CD8-positive, alpha-beta T cell (primary cell): ENCODE measurements at regions of chr17 and their contacts with region 1.

Region 1: DNA sequence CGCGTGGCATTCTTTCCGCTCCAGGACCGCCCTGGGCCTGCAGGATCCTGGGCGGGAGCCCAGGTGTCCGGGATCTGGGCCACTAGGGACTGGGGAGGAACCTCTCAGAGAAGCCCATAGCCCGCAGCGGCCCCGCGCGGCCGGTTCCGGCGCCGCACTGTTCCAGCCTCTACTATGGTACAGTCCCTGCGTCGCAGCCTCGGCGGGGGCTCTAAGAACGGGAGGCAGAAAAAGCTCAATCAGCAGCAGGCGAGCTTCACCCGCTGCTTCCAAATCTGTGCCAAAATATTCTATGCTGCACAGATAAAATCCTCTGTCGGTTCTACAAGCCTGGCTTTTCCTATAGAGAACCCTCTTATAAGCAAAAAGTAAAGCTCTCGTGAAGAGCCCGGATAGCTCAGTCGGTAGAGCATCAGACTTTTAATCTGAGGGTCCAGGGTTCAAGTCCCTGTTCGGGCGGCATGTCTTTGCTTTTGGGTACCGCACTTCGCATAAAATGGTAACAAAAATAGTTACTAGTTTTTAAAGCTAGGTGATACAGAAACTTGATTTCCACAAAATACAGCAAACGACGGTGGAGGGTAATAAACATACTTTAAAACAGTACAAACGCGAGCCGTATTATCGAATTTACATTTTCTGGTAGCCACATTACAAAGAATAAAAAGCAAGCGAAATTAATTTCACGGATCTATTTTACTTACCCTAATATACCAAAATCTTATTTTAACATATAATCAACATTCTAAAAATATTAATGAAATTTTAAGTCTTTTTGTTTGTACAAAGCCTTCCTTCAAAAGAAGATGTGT is 661 bp upstream of the ALOXE3 start:
- DNase-seq: peak; percentile 70 to 90 (median 83)
- ATAC-seq: peak; percentile 62
- H3K4me3 ChIP-seq: peak overlapping the region; percentile 69 to 77
- H3K4me3 Mint-ChIP-seq: peak overlapping the region; percentile 93
- H3K27ac ChIP-seq: peak overlapping the region; percentile 32 to 53
- H3K27ac Mint-ChIP-seq: peak overlapping the region; percentile 95
- H3K4me1 ChIP-seq: peaks cover 46% of the 10 kb centered on the region
- H3K4me1 Mint-ChIP-seq: peaks cover 45% of the 10 kb centered on the region
- H3K27me3 ChIP-seq: peaks cover 0 to 57% of the 10 kb centered on the region in 2 experiments
- H3K27me3 Mint-ChIP-seq: peaks cover 33% of the 10 kb centered on the region
- CTCF ChIP-seq: peak; percentile 88

Region 2: GRCh38 chr17:8073627-8074484 is 45.1 kb before region 1 on chr17:
- CTCF ChIA-PET with region 1: interaction called, 66 read pairs
- POLR2A ChIA-PET with region 1: interaction called, 7 read pairs
- intact Hi-C with region 1: loop called in 1 of 2 experiments (anchors 2 kb)
- DNase-seq: peak; percentile 74 to 93 (median 88)
- ATAC-seq: peak; percentile 96
- H3K4me3 ChIP-seq: peak overlapping the region in 1 of 2 experiments; percentile 45
- H3K4me3 Mint-ChIP-seq: peak overlapping the region; percentile 84
- H3K27ac ChIP-seq: no peak overlapping the region
- H3K27ac Mint-ChIP-seq: peak overlapping the region; percentile 37
- H3K4me1 ChIP-seq: peaks cover 22% of the 10 kb centered on the region
- H3K4me1 Mint-ChIP-seq: peaks cover 22% of the 10 kb centered on the region
- H3K27me3 ChIP-seq: peaks cover 11 to 22% of the 10 kb centered on the region in 2 experiments
- H3K27me3 Mint-ChIP-seq: peaks cover 36% of the 10 kb centered on the region
- CTCF ChIP-seq: peak; percentile 89

Region 3: GRCh38 chr17:8151123-8151640 is 32.2 kb after region 1 on chr17:
- CTCF ChIA-PET with region 1: interaction called, 15 read pairs
- POLR2A ChIA-PET with region 1: interaction called, 16 read pairs
- intact Hi-C with region 1: loop called (anchors 1 kb)
- DNase-seq: peak in 8 of 9 experiments; percentile 85 to 96 (median 90)
- ATAC-seq: peak; percentile 44
- H3K4me3 ChIP-seq: peak overlapping the region; percentile 63 to 69
- H3K4me3 Mint-ChIP-seq: no peak overlapping the region
- H3K27ac ChIP-seq: peak overlapping the region; percentile 100
- H3K27ac Mint-ChIP-seq: no peak overlapping the region
- H3K4me1 ChIP-seq: peaks cover 56% of the 10 kb centered on the region
- H3K4me1 Mint-ChIP-seq: peaks cover 49% of the 10 kb centered on the region
- H3K27me3 ChIP-seq: no peaks in the 10 kb centered on the region
- H3K27me3 Mint-ChIP-seq: no peaks in the 10 kb centered on the region
- CTCF ChIP-seq: no peak

Region 4: GRCh38 chr17:8189711-8190477 is 70.9 kb after region 1 on chr17 and contains the start of gene BORCS6:
- CTCF ChIA-PET with region 1: interaction called, 45 read pairs
- POLR2A ChIA-PET with region 1: interaction called, 36 read pairs
- intact Hi-C with region 1: loop called (anchors 1 kb)
- DNase-seq: peak; percentile 87 to 99 (median 93)
- ATAC-seq: peak; percentile 69
- H3K4me3 ChIP-seq: peak within 1 kb of the TSS; percentile 95 to 98
- H3K4me3 Mint-ChIP-seq: peak within 1 kb of the TSS; percentile 1
- H3K27ac ChIP-seq: peak within 1 kb of the TSS; percentile 63 to 93
- H3K27ac Mint-ChIP-seq: peak within 1 kb of the TSS; percentile 94
- H3K4me1 ChIP-seq: peaks cover 38% of the 10 kb centered on the region
- H3K4me1 Mint-ChIP-seq: peaks cover 13% of the 10 kb centered on the region
- H3K27me3 ChIP-seq: no peaks in the 10 kb centered on the region
- H3K27me3 Mint-ChIP-seq: no peaks in the 10 kb centered on the region
- CTCF ChIP-seq: no peak
- total RNA-seq, gene BORCS6: 6.1 to 6.7 TPM

Region 5: GRCh38 chr17:8288336-8289102 is 169.5 kb after region 1 on chr17 and contains the start of gene RANGRF:
- CTCF ChIA-PET with region 1: no interaction called
- POLR2A ChIA-PET with region 1: interaction called, 4 read pairs
- intact Hi-C with region 1: loop called in 1 of 2 experiments (anchors 2 kb)
- DNase-seq: peak; percentile 38 to 89 (median 79)
- ATAC-seq: peak; percentile 94
- H3K4me3 ChIP-seq: peak within 1 kb of the TSS; percentile 73 to 82
- H3K4me3 Mint-ChIP-seq: peak within 1 kb of the TSS; percentile 97
- H3K27ac ChIP-seq: peak within 1 kb of the TSS; percentile 77 to 89
- H3K27ac Mint-ChIP-seq: peak within 1 kb of the TSS; percentile 97
- H3K4me1 ChIP-seq: peaks cover 17% of the 10 kb centered on the region
- H3K4me1 Mint-ChIP-seq: peaks cover 39% of the 10 kb centered on the region
- H3K27me3 ChIP-seq: no peaks in the 10 kb centered on the region
- H3K27me3 Mint-ChIP-seq: no peaks in the 10 kb centered on the region
- CTCF ChIP-seq: no peak
- total RNA-seq, gene RANGRF: 18.9 to 20.2 TPM

Region 6: DNA sequence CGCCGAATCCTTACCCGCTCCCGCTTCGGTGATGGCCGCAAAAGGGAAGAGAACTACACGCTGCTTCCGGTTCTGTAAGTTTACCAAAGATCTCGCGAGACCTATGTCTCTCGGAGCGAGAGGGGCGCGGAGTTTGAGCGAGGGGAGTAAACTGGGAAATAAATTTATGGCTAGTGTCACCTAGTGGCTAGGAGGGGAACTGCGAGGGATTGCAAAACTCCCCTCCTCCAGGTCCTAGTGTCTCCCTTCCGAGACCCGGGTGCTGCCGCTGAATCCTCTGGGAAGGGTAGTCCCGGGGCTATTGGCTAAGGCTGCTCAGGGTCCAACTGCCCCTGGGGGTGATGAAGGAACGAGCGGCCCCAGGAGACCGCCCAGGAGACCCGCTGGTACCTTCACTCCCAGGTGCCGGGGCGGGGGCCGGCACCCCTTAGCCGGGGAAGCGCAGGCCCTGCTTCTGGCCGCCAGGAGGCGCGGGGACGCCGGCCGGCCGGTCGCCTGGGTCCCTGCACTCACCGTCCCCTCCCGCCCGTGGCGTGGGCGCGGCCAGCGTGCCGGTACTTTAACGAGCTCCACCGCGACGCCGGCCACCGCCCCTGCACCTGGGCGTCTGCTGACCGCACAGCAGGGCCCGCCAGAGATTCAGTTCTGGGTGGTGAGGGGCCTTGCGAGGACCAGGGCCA is 264.3 kb after region 1 on chr17 and contains the start of gene RPL26:
- CTCF ChIA-PET with region 1: no interaction called
- POLR2A ChIA-PET with region 1: no interaction called
- intact Hi-C with region 1: loop called (anchors 5 to 10 kb)
- DNase-seq: peak; percentile 88 to 98 (median 95)
- ATAC-seq: peak; percentile 89
- H3K4me3 ChIP-seq: peak within 1 kb of the TSS; percentile 70 to 72
- H3K4me3 Mint-ChIP-seq: peak within 1 kb of the TSS; percentile 96
- H3K27ac ChIP-seq: peak within 1 kb of the TSS; percentile 71 to 76
- H3K27ac Mint-ChIP-seq: peak within 1 kb of the TSS; percentile 93
- H3K4me1 ChIP-seq: peaks cover 40% of the 10 kb centered on the region
- H3K4me1 Mint-ChIP-seq: peaks cover 69% of the 10 kb centered on the region
- H3K27me3 ChIP-seq: no peaks in the 10 kb centered on the region
- H3K27me3 Mint-ChIP-seq: no peaks in the 10 kb centered on the region
- CTCF ChIP-seq: peak; percentile 100
- total RNA-seq, gene RPL26: 2,888 to 2,889 TPM